ENCODE measurements at regions of chr3 and their contacts with region 1.

Region 1: GRCh38 chr3:99753268-99753975 is 64.2 kb upstream of the CMSS1 start:
- DNase-seq: no peak
- ATAC-seq: peak; percentile 75
- H3K4me3 ChIP-seq: no peak overlapping the region
- H3K27ac ChIP-seq: peak overlapping the region in 1 of 2 donors; percentile 67
- H3K4me1 ChIP-seq: peaks cover 1 to 9% of the 10 kb centered on the region in 2 donors
- H3K27me3 ChIP-seq: no peaks in the 10 kb centered on the region

Region 2: DNA sequence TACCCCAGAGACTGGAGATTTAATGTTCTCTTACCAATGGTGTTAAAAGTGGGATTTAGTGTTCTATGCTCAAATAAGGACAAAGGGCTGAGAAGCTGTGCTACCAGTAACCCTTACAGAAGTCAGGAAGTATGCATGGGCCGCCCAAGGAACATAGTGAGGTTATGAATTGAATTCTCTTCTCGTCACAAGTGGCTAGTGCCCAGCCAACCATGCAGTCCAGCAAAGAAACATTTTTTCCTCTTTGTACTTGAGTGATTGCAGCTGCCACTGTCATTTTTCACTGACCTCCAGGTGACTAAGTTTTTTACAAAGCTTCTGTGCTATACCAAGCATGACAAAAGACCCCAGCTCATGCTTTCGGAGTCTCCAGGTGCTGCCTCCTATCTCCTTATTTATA is 741.4 kb before region 1 on chr3:
- intact Hi-C with region 1: loop called in 1 of 2 experiments (anchors 5 kb)
- DNase-seq: peak; percentile 63 to 81
- ATAC-seq: peak; percentile 53
- H3K4me3 ChIP-seq: no peak overlapping the region
- H3K27ac ChIP-seq: no peak overlapping the region
- H3K4me1 ChIP-seq: peaks cover 0 to 4% of the 10 kb centered on the region in 2 donors
- H3K27me3 ChIP-seq: no peaks in the 10 kb centered on the region

Region 3: DNA sequence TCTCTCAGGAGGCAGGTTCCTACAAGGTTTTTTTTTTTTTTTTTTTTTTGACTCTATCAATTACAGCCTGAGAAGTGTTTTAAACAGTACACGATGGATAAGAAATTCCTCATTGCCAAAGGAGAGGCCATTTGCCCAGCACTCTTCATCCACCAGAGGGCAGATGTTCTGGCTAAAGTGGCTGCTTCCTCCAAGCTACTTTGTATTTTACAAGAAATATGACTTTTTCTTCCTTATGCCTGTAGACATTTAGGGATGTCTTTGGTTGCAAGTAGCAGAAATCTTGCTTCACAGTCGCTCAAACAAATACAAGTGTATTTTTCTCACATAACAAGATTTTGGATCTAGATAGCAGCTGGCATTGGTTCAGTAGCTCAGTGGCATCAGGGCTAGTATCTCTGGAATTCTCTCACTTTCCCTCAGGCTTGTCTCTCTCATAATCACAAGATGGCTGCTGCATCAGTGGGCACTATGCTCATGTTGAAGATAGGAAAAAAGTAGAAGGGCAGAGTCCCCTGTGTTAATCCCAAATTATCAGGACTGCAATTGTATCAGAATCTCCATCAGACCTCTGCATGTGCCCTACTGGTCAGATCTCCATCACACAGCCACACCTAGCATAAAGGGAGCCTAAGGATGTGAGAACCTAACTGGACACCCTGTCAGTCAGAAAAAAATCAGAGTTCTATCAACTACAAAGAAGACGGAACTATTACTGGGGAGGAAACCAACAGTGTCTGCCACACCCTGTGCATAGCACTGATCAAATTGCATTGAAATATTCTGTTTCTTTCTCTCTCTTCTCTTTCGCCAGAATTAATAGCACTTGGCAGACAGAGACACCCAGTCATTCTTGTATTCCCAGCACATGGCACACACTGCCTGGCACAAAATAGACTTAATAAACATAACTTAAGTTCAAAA is 253.9 kb before region 1 on chr3:
- intact Hi-C with region 1: loop called (anchors 10 kb)
- DNase-seq: no peak
- ATAC-seq: peak; percentile 75
- H3K4me3 ChIP-seq: no peak overlapping the region
- H3K27ac ChIP-seq: peak overlapping the region; percentile 87 to 99
- H3K4me1 ChIP-seq: peaks cover 9 to 11% of the 10 kb centered on the region in 2 donors
- H3K27me3 ChIP-seq: no peaks in the 10 kb centered on the region

Region 4: GRCh38 chr3:99627062-99627826 is 126.2 kb before region 1 on chr3:
- intact Hi-C with region 1: no loop called
- DNase-seq: no peak
- ATAC-seq: no peak
- H3K4me3 ChIP-seq: no peak overlapping the region
- H3K27ac ChIP-seq: no peak overlapping the region
- H3K4me1 ChIP-seq: peaks cover 0 to 3% of the 10 kb centered on the region in 2 donors
- H3K27me3 ChIP-seq: no peaks in the 10 kb centered on the region

Region 5: DNA sequence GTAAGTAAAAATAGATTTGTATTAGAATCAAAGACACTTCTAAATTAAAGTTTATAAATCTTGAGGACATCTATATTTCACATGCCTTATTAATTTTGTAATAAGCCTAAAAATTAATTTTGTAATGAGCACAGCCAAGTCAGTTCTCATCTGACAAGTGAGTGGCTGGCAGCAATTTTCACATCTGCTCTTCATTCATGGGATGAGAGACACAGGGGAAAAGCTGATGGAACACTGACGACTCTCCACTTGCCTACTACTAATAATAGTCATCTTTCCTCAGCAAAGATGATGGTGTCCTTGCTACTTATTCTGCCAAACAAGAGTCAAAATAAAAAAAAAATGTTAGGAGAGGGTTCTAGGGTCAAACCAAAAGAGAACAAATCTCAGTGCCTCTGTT is 49.9 kb after region 1 on chr3:
- intact Hi-C with region 1: no loop called
- DNase-seq: no peak
- ATAC-seq: no peak
- H3K4me3 ChIP-seq: no peak overlapping the region
- H3K27ac ChIP-seq: no peak overlapping the region
- H3K4me1 ChIP-seq: no peaks in the 10 kb centered on the region
- H3K27me3 ChIP-seq: no peaks in the 10 kb centered on the region

Measured in aorta (tissue), 5 donors.